Naive thymus-derived CD4-positive, alpha-beta T cell (primary cell): ENCODE measurements at regions of chrX and their contacts with region 1.

Region 1: DNA sequence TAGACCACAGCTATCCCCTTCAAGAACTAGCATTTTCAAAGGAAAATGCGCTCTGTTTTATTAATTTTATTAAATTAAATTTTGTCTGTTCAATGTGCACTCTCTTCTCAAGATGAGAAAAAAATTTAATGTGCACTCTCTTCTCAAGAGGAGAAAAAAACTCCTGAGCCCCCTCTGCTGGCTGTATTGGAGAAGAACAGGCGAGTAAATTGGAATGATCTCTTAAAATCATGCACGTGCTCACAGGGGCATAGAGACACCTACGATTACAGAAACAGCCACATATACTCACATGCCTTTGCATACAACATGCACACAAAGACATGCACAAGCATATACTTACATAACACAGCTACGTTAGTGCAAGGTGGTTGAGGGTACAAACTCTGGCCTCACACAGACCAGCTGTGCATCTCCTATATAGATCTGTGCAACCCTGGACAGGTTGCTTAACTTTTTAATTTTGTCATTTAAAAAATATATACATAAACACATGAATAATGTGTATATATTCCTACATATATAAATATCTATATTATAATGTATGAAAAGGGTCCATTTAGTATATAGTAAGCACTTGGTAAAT is 176.2 kb upstream of the CXorf66 start:
- DNase-seq: peak in 6 of 9 donors; percentile 1 to 38 (median 18)
- ATAC-seq: no peak
- H3K4me3 ChIP-seq: no peak overlapping the region
- H3K4me3 Mint-ChIP-seq: no peak overlapping the region
- H3K27ac ChIP-seq: no peak overlapping the region
- H3K27ac Mint-ChIP-seq: no peak overlapping the region
- H3K4me1 ChIP-seq: no peaks in the 10 kb centered on the region
- H3K4me1 Mint-ChIP-seq: no peaks in the 10 kb centered on the region
- H3K27me3 ChIP-seq: no peaks in the 10 kb centered on the region
- H3K27me3 Mint-ChIP-seq: no peaks in the 10 kb centered on the region

Region 2: GRCh38 chrX:140057001-140057411 is 84.5 kb before region 1 on chrX:
- CTCF ChIA-PET with region 1: interaction called, 3 read pairs
- POLR2A ChIA-PET with region 1: no interaction called
- intact Hi-C with region 1: loop called (anchors 1 kb)
- DNase-seq: peak; percentile 10 to 50 (median 30)
- ATAC-seq: peak; percentile 73
- H3K4me3 ChIP-seq: no peak overlapping the region
- H3K4me3 Mint-ChIP-seq: peak overlapping the region in 2 of 10 donors; percentile 29 to 48
- H3K27ac ChIP-seq: no peak overlapping the region
- H3K27ac Mint-ChIP-seq: no peak overlapping the region
- H3K4me1 ChIP-seq: no peaks in the 10 kb centered on the region
- H3K4me1 Mint-ChIP-seq: peaks cover 0 to 5% (median 4%) of the 10 kb centered on the region in 7 donors
- H3K27me3 ChIP-seq: no peaks in the 10 kb centered on the region
- H3K27me3 Mint-ChIP-seq: peaks cover 0 to 4% (median 0%) of the 10 kb centered on the region in 5 donors